Endothelial cell of umbilical vein (primary cell): ENCODE measurements at regions of chr12 and their contacts with region 1.

Region 1: GRCh38 chr12:88856201-88856600 is 275.9 kb upstream of the KITLG start:
- DNase-seq: no peak
- H3K4me3 ChIP-seq: no peak overlapping the region
- H3K27ac ChIP-seq: no peak overlapping the region
- H3K4me1 ChIP-seq: no peaks in the 10 kb centered on the region
- H3K27me3 ChIP-seq: no peaks in the 10 kb centered on the region
- CTCF ChIP-seq: no peak
- POLR2A ChIP-seq: no peak

Region 2: GRCh38 chr12:88842314-88842713 is 13.9 kb before region 1 on chr12:
- CTCF ChIA-PET with region 1: interaction called, 8 read pairs
- POLR2A ChIA-PET with region 1: no interaction called
- dilution Hi-C with region 1: no loop called
- intact Hi-C with region 1: loop called (anchors 1 kb)
- DNase-seq: no peak
- H3K4me3 ChIP-seq: no peak overlapping the region
- H3K27ac ChIP-seq: no peak overlapping the region
- H3K4me1 ChIP-seq: no peaks in the 10 kb centered on the region
- H3K27me3 ChIP-seq: no peaks in the 10 kb centered on the region
- CTCF ChIP-seq: no peak
- POLR2A ChIP-seq: no peak

Region 3: DNA sequence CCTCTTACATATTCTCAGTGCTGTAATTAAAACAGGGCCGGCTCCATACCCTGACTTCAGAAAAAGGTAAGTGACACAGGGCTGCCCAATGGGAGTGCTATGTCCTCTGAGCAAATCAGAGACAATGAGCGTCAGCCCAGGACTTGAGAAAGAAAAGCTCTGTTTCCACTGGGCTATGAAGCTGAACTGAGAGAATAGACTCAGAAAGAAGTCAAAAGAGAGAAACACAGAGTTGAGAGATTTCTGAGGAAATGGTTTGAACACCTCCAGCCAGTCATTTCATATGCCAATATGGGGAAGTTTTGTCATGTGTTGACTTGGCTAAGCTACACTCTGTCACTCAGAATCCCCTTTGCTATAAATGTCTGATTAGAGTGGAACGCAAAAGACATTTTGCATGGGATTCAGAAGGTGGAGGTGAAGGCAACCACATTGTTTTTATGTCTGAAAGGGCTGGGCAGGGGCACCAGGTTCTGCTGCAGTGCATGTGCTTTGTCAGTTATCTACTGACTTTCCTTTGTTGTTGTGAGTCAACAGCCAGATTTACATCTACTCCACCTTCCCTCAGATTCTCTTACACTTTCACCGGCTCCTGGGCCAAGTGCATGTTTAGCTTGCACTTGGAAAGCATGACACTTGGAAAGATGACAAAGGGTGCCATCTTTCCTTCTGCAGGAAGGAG is 182.8 kb after region 1 on chr12:
- CTCF ChIA-PET with region 1: no interaction called
- POLR2A ChIA-PET with region 1: no interaction called
- dilution Hi-C with region 1: no loop called
- intact Hi-C with region 1: no loop called
- DNase-seq: no peak
- H3K4me3 ChIP-seq: no peak overlapping the region
- H3K27ac ChIP-seq: no peak overlapping the region
- H3K4me1 ChIP-seq: no peaks in the 10 kb centered on the region
- H3K27me3 ChIP-seq: no peaks in the 10 kb centered on the region
- CTCF ChIP-seq: no peak
- POLR2A ChIP-seq: no peak